PC-9 (cell line): ENCODE measurements at regions of chr6 and their contacts with region 1.

Region 1: GRCh38 chr6:6661684-6662083 is 73.2 kb downstream of the LY86 start:
- DNase-seq: peak; percentile 26 to 56
- H3K4me3 ChIP-seq: no peak overlapping the region
- H3K27ac ChIP-seq: no peak overlapping the region
- H3K4me1 ChIP-seq: peaks cover 9% of the 10 kb centered on the region
- H3K27me3 ChIP-seq: no peaks in the 10 kb centered on the region
- CTCF ChIP-seq: no peak

Region 2: GRCh38 chr6:4994741-4995140 is 1666.9 kb before region 1 on chr6:
- CTCF ChIA-PET with region 1: no interaction called
- POLR2A ChIA-PET with region 1: interaction called, 10 read pairs
- intact Hi-C with region 1: no loop called
- DNase-seq: no peak
- H3K4me3 ChIP-seq: no peak overlapping the region
- H3K27ac ChIP-seq: no peak overlapping the region
- H3K4me1 ChIP-seq: no peaks in the 10 kb centered on the region
- H3K27me3 ChIP-seq: no peaks in the 10 kb centered on the region
- CTCF ChIP-seq: no peak

Region 3: DNA sequence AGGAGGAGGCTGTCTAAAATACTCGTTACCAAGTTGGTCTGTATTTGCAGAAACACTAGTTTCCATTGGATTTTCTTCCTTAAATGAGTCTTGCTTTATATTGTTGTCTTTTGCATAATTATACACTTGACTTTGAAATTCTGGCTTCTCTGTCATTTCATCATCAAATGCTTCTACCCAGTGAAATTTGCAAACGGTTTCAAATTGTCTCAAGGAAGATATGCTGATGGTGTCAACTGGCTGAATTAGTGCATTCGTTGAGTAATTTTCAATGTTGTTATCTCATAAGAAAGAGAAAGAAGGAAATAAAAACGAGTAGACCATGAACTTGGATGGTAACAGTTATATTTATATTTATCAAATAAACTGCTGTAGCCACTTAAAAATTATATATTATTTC is 717.1 kb after region 1 on chr6:
- CTCF ChIA-PET with region 1: no interaction called
- POLR2A ChIA-PET with region 1: no interaction called
- intact Hi-C with region 1: no loop called
- DNase-seq: no peak
- H3K4me3 ChIP-seq: no peak overlapping the region
- H3K27ac ChIP-seq: no peak overlapping the region
- H3K4me1 ChIP-seq: no peaks in the 10 kb centered on the region
- H3K27me3 ChIP-seq: no peaks in the 10 kb centered on the region
- CTCF ChIP-seq: no peak